ENCODE measurements at regions of chr4 and their contacts with region 1.

Region 1: GRCh38 chr4:15457406-15458201 is 12.1 kb upstream of the CC2D2A start:
- DNase-seq: no peak
- ATAC-seq: peak; percentile 99
- H3K4me3 Mint-ChIP-seq: peak overlapping the region; percentile 21
- H3K27ac Mint-ChIP-seq: peak overlapping the region; percentile 72
- H3K4me1 Mint-ChIP-seq: peaks cover 17% of the 10 kb centered on the region
- H3K27me3 Mint-ChIP-seq: peaks cover 2% of the 10 kb centered on the region
- CTCF ChIP-seq: no peak

Region 2: DNA sequence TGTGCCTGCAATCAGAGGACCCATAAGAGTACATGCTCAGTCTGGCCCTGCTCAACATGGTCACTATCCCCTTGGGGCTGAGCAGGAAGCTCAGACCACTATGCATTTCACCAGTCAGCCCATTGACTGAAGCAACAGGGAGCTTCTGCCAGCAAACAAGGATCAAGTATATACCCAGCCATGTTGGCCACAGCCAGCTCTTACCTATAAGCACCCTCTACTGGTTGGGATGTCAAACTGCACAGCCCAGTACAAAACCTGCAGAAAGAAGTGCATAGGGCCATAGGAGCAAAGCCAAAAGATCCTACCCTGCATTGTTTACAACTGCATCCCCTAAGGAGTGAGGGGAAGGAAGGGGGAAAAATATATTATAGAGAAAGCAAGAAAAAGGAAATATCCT is 669.7 kb before region 1 on chr4:
- CTCF ChIA-PET with region 1: no interaction called
- POLR2A ChIA-PET with region 1: no interaction called
- intact Hi-C with region 1: loop called (anchors 5 kb)
- DNase-seq: no peak
- ATAC-seq: peak; percentile 70
- H3K4me3 Mint-ChIP-seq: no peak overlapping the region
- H3K27ac Mint-ChIP-seq: no peak overlapping the region
- H3K4me1 Mint-ChIP-seq: no peaks in the 10 kb centered on the region
- H3K27me3 Mint-ChIP-seq: peaks cover 8% of the 10 kb centered on the region
- CTCF ChIP-seq: no peak

Region 3: GRCh38 chr4:15162465-15163283 is 294.9 kb before region 1 on chr4:
- CTCF ChIA-PET with region 1: no interaction called
- POLR2A ChIA-PET with region 1: no interaction called
- intact Hi-C with region 1: loop called (anchors 1 kb)
- DNase-seq: no peak
- ATAC-seq: no peak
- H3K4me3 Mint-ChIP-seq: no peak overlapping the region
- H3K27ac Mint-ChIP-seq: no peak overlapping the region
- H3K4me1 Mint-ChIP-seq: no peaks in the 10 kb centered on the region
- H3K27me3 Mint-ChIP-seq: peaks cover 8% of the 10 kb centered on the region
- CTCF ChIP-seq: no peak

Region 4: DNA sequence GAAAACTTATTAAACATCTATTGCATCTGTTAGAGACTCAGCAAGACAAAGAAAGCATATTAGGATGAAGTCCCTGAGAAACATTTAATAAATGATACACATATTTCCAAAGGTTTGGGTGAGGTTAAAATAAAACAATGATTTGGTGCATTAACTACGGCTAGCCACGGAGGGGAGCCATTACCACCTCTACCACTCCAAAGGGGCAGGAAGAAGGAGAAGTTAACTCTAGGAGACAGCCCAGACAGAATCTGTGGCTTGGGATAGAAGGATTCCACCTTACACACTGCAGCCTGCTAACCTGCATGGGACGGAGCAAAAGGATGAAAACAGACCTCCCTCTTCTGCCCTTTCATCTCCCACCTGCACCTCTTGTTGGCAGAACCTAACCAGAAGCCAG is 218.9 kb before region 1 on chr4:
- CTCF ChIA-PET with region 1: interaction called, 92 read pairs
- POLR2A ChIA-PET with region 1: no interaction called
- intact Hi-C with region 1: loop called (anchors 1 kb)
- DNase-seq: no peak
- ATAC-seq: peak; percentile 58
- H3K4me3 Mint-ChIP-seq: no peak overlapping the region
- H3K27ac Mint-ChIP-seq: no peak overlapping the region
- H3K4me1 Mint-ChIP-seq: peaks cover 8% of the 10 kb centered on the region
- H3K27me3 Mint-ChIP-seq: peaks cover 2% of the 10 kb centered on the region
- CTCF ChIP-seq: no peak

Region 5: DNA sequence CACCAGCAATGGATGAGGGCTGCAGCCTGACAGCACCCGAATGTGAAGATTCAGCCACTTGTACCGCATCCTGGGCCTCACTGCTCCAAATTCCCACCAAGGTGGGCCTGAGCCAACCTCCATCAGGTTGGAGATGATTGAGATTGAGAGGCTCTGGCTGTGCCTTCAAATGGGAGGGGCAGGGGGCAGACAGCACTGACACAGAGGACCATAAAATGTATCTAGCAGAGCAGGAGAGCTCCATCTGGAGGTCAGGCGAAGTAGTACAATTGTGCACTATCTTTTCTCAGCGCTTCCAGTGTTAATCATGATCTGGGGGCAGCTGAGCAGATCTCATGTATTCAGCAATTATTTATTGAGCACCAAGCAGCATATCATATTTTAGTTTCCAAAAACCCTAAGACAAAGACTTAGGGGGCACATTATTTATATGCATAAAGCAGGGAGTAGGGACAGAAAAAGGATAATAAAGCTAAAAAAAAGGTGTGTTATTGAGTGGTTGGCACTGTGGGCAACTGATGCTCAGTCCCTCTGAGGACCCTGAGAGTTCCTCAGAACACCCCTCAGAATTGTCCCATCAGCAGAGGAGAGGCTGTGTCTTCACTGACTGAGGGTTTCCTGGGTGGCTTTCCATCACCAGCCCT is 61.3 kb before region 1 on chr4:
- CTCF ChIA-PET with region 1: interaction called, 26 read pairs
- POLR2A ChIA-PET with region 1: no interaction called
- intact Hi-C with region 1: loop called (anchors 2 kb)
- DNase-seq: no peak
- ATAC-seq: peak; percentile 88
- H3K4me3 Mint-ChIP-seq: no peak overlapping the region
- H3K27ac Mint-ChIP-seq: no peak overlapping the region
- H3K4me1 Mint-ChIP-seq: peaks cover 32% of the 10 kb centered on the region
- H3K27me3 Mint-ChIP-seq: peaks cover 2% of the 10 kb centered on the region
- CTCF ChIP-seq: peak; percentile 33

Region 6: GRCh38 chr4:15423285-15423711 is 34.3 kb before region 1 on chr4:
- CTCF ChIA-PET with region 1: no interaction called
- POLR2A ChIA-PET with region 1: no interaction called
- intact Hi-C with region 1: no loop called
- DNase-seq: no peak
- ATAC-seq: no peak
- H3K4me3 Mint-ChIP-seq: no peak overlapping the region
- H3K27ac Mint-ChIP-seq: no peak overlapping the region
- H3K4me1 Mint-ChIP-seq: peaks cover 2% of the 10 kb centered on the region
- H3K27me3 Mint-ChIP-seq: no peaks in the 10 kb centered on the region
- CTCF ChIP-seq: no peak

Region 7: DNA sequence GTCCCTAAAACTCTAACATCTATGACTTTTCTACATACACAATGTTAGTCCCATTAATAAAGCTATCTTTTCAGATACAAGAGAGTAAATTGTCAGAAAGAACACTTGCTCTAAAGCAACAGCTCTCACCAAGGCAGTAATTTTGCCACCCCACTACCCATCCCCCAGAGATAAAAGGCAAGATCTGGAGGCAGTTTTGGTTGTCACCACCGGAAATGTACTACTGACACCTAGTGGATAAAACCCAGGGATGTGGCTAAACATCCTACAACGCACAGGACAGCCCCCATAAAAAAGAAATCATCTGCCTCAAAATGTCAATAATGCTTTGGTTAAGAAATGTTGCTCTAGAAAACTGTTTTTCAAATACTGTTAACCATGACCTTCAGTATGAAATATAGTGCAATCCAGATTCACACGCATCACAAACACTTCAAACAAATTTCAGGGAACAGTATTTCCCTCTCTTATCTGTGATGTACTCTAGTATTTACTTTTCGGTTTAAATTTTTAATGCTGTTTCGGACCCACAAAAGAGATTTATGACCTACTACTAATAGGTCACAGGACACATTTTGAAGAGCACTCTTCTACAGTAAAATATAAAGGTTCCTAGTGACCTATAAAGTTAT is 192.4 kb after region 1 on chr4:
- CTCF ChIA-PET with region 1: interaction called, 4 read pairs
- POLR2A ChIA-PET with region 1: no interaction called
- intact Hi-C with region 1: loop called (anchors 1 kb)
- DNase-seq: no peak
- ATAC-seq: peak; percentile 63
- H3K4me3 Mint-ChIP-seq: no peak overlapping the region
- H3K27ac Mint-ChIP-seq: peak overlapping the region; percentile 31
- H3K4me1 Mint-ChIP-seq: peaks cover 53% of the 10 kb centered on the region
- H3K27me3 Mint-ChIP-seq: no peaks in the 10 kb centered on the region
- CTCF ChIP-seq: no peak